B cell (primary cell): ENCODE measurements at regions of chr1 and their contacts with region 1.

Region 1: DNA sequence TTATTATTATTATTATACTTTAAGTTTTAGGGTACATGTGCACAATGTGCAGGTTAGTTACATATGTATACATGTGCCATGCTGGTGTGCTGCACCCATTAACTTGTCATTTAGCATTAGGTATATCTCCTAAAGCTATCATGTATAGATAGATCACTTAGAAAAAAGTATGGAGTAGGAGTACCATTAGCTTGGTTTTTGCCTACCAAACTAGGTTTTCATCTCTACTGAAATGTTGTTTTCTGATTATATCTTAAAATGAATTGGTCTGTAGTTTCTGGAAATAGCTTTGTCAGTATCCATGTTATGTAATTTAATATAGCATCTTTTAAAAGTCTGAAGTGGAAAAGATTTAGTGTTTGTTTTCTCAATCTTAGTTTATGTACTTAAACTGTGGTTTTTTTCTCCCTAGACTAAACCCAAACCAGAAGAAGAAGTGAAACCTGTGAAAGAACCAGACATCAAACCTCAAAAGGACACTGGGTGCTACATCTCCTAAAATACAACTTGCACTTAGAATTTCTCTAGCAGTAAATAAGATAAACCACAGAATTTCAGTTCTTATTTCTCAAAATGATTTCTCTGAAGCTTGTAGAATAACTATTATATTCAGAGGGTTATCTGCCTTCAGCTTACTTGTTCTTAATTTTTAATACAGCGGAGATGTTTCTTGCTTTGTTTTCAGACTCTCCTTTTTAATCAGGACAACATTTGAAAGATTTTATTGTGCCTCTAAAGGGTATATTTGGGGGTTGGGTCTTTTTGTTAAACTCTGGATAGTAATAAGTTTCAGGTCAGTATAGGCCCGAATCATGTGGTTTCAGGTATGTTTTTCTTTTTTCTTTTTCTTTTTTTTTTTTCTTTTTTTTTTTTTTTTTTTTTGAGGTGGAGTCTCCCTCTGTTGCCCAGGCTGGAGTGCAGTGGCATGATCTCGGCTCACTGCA is 4.5 kb upstream of the FAM177B start:
- DNase-seq: peak; percentile 84
- ATAC-seq: peak; percentile 82
- H3K4me3 ChIP-seq: peak overlapping the region in 3 of 5 experiments; percentile 13 to 45 (median 27)
- H3K4me3 Mint-ChIP-seq: peak overlapping the region; percentile 78
- H3K27ac ChIP-seq: peak overlapping the region; percentile 62 to 84
- H3K27ac Mint-ChIP-seq: peak overlapping the region; percentile 93
- H3K4me1 ChIP-seq: peaks cover 56 to 68% of the 10 kb centered on the region in 2 donors
- H3K4me1 Mint-ChIP-seq: peaks cover 56% of the 10 kb centered on the region
- H3K27me3 ChIP-seq: no peaks in the 10 kb centered on the region
- H3K27me3 Mint-ChIP-seq: no peaks in the 10 kb centered on the region
- CTCF ChIP-seq: no peak

Region 2: DNA sequence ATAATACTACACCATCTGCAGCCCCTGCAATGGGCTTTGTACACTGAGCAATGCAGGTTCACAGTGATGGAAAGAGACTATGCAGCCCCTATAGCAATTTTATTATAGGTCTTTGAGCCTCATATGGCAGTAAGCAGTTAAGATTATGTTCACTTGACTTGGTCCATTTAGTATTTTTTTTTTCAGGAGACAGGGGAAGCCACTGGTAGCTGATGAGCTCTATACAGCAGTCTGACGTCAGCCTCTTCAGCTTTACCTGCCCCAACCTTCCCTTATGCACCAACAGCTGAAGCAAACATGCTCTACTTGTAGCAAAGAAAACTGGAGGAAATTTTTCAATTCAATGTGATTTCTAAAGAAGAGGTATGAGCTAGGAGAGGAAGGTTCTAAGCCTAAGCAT is 52.4 kb before region 1 on chr1:
- CTCF ChIA-PET with region 1: no interaction called
- POLR2A ChIA-PET with region 1: no interaction called
- intact Hi-C with region 1: no loop called
- DNase-seq: no peak
- ATAC-seq: no peak
- H3K4me3 ChIP-seq: no peak overlapping the region
- H3K4me3 Mint-ChIP-seq: no peak overlapping the region
- H3K27ac ChIP-seq: no peak overlapping the region
- H3K27ac Mint-ChIP-seq: no peak overlapping the region
- H3K4me1 ChIP-seq: no peaks in the 10 kb centered on the region
- H3K4me1 Mint-ChIP-seq: no peaks in the 10 kb centered on the region
- H3K27me3 ChIP-seq: no peaks in the 10 kb centered on the region
- H3K27me3 Mint-ChIP-seq: no peaks in the 10 kb centered on the region
- CTCF ChIP-seq: no peak

Region 3: DNA sequence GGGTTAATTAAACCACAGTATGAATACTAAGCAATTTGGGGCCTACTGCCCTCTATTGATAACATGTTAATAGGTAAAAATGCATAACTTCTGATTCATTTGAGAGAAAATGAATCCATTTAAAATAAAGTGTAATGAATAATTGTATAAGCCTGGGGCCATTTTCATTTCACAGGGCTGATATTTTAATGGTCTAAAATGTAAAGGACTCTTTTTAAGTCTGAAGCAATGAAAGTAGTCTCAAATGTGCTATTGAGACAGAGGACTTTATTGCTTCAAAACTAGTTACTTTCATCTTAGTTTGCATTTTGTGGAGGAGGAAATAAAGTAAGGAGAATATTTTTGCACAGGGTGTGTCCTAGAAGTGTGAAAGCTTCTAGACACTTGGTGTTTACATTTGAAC is 255.2 kb after region 1 on chr1:
- CTCF ChIA-PET with region 1: interaction called, 3 read pairs
- POLR2A ChIA-PET with region 1: no interaction called
- intact Hi-C with region 1: loop called (anchors 5 kb)
- DNase-seq: no peak
- ATAC-seq: no peak
- H3K4me3 ChIP-seq: no peak overlapping the region
- H3K4me3 Mint-ChIP-seq: no peak overlapping the region
- H3K27ac ChIP-seq: peak overlapping the region in 1 of 2 donors; percentile 10
- H3K27ac Mint-ChIP-seq: no peak overlapping the region
- H3K4me1 ChIP-seq: no peaks in the 10 kb centered on the region
- H3K4me1 Mint-ChIP-seq: peaks cover 15% of the 10 kb centered on the region
- H3K27me3 ChIP-seq: no peaks in the 10 kb centered on the region
- H3K27me3 Mint-ChIP-seq: no peaks in the 10 kb centered on the region
- CTCF ChIP-seq: no peak